ENCODE measurements at regions of chr4 and their contacts with region 1.

Region 1: GRCh38 chr4:103204111-103204510 is 6.0 kb upstream of the CENPE start:
- DNase-seq: peak; percentile 40
- ATAC-seq: 0 out of 2 replicates have a peak, but pooled peaks have one; percentile 45
- H3K4me3 ChIP-seq: no peak overlapping the region
- H3K27ac ChIP-seq: no peak overlapping the region
- H3K4me1 ChIP-seq: no peaks in the 10 kb centered on the region
- H3K27me3 ChIP-seq: no peaks in the 10 kb centered on the region
- CTCF ChIP-seq: peak; percentile 62

Region 2: GRCh38 chr4:103478729-103479128 is 274.6 kb after region 1 on chr4:
- CTCF ChIA-PET with region 1: no interaction called
- POLR2A ChIA-PET with region 1: no interaction called
- intact Hi-C with region 1: loop called (anchors 5 kb)
- DNase-seq: peak; percentile 12
- ATAC-seq: no peak
- H3K4me3 ChIP-seq: no peak overlapping the region
- H3K27ac ChIP-seq: no peak overlapping the region
- H3K4me1 ChIP-seq: no peaks in the 10 kb centered on the region
- H3K27me3 ChIP-seq: no peaks in the 10 kb centered on the region
- CTCF ChIP-seq: peak; percentile 24; the same call in 1 of the 2 replicates

Region 3: GRCh38 chr4:103634236-103634635 is 430.1 kb after region 1 on chr4:
- CTCF ChIA-PET with region 1: no interaction called
- POLR2A ChIA-PET with region 1: no interaction called
- intact Hi-C with region 1: loop called (anchors 5 kb)
- DNase-seq: peak; percentile 7
- ATAC-seq: no peak
- H3K4me3 ChIP-seq: no peak overlapping the region
- H3K27ac ChIP-seq: no peak overlapping the region
- H3K4me1 ChIP-seq: no peaks in the 10 kb centered on the region
- H3K27me3 ChIP-seq: no peaks in the 10 kb centered on the region
- CTCF ChIP-seq: peak; percentile 30; the same call in 1 of the 2 replicates

Region 4: DNA sequence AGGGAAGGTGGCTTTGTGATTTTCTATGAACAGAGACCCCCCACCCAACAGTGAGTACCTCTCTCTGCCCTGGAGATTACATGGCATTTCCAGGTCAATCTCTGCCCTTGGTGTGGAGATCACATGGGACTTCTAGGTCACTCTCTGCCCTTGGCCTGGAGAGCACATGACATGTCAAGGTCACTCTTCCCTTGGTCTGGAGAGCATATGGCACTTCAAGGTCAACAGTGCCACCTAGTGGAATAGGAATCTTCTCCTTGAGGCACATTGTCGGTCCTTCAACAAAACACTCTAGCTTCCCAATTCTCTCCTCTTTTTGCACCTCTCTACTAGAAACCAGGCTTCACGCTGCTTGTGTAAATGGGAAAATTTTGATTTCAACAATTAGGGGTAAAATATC is 581.9 kb after region 1 on chr4:
- CTCF ChIA-PET with region 1: interaction called, 5 read pairs
- POLR2A ChIA-PET with region 1: no interaction called
- intact Hi-C with region 1: loop called (anchors 1 kb)
- DNase-seq: peak; percentile 63
- ATAC-seq: peak; percentile 57
- H3K4me3 ChIP-seq: no peak overlapping the region
- H3K27ac ChIP-seq: no peak overlapping the region
- H3K4me1 ChIP-seq: no peaks in the 10 kb centered on the region
- H3K27me3 ChIP-seq: no peaks in the 10 kb centered on the region
- CTCF ChIP-seq: peak; percentile 71

Region 5: GRCh38 chr4:103915224-103915869 is 711.2 kb after region 1 on chr4:
- CTCF ChIA-PET with region 1: no interaction called
- POLR2A ChIA-PET with region 1: no interaction called
- intact Hi-C with region 1: loop called (anchors 1 kb)
- DNase-seq: peak; percentile 25
- ATAC-seq: no peak
- H3K4me3 ChIP-seq: no peak overlapping the region
- H3K27ac ChIP-seq: no peak overlapping the region
- H3K4me1 ChIP-seq: no peaks in the 10 kb centered on the region
- H3K27me3 ChIP-seq: no peaks in the 10 kb centered on the region
- CTCF ChIP-seq: peak; percentile 65

Region 6: GRCh38 chr4:103934178-103934789 is 730.2 kb after region 1 on chr4:
- CTCF ChIA-PET with region 1: no interaction called
- POLR2A ChIA-PET with region 1: no interaction called
- intact Hi-C with region 1: loop called (anchors 5 kb)
- DNase-seq: peak; percentile 65
- ATAC-seq: no peak
- H3K4me3 ChIP-seq: no peak overlapping the region
- H3K27ac ChIP-seq: no peak overlapping the region
- H3K4me1 ChIP-seq: no peaks in the 10 kb centered on the region
- H3K27me3 ChIP-seq: no peaks in the 10 kb centered on the region
- CTCF ChIP-seq: peak; percentile 74

Measured in PC-3 (cell line).